K562 (cell line): ENCODE measurements at regions of chr11 and their contacts with region 1.

Region 1: DNA sequence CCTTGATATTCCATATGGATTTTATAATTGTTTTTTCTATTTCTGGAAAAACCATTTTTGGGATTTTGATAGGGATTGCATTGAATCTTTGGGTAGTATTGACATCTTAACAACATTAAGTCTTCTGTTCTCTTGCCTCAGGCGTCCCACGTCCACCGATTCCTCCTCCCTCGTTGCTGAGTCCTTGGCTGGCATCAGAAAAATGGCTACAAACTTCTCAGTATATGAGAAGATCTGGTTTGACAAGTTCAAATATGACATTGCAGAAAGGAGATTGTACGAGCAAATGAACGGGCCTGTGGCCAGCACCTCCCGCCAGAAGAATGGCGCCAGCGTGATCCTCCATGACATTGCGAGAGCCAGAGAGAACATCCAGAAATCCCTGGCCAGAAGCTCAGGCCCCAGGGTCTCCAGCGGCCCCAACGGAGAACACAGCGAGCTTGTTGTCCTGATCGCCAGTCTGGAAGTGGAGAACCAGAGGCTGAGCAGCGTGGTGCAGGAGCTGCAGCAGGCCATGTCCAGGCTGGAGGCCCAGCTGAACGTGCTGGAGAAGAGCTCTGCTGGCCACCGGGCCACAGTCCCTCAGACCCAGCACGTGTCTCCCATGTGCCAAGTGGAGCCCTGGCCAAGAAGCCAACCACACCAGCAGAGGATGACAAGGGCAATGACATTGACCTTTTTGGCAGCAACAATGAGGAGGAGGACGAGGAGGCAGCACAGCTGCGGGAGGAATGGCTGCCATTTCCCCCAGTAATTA is 20.7 kb upstream of the SCGB1D1 start:
- DNase-seq: no peak
- ATAC-seq: no peak
- H3K4me3 ChIP-seq: no peak overlapping the region
- H3K27ac ChIP-seq: no peak overlapping the region
- H3K4me1 ChIP-seq: peaks cover 0 to 6% of the 10 kb centered on the region in 2 experiments; a peak in 3 of 5 replicates
- H3K27me3 ChIP-seq: peaks cover 28 to 55% of the 10 kb centered on the region in 2 experiments
- CTCF ChIP-seq: no peak
- EP300 ChIP-seq: no peak
- POLR2A ChIP-seq: no peak
- RAD21 ChIP-seq: no peak

Region 2: DNA sequence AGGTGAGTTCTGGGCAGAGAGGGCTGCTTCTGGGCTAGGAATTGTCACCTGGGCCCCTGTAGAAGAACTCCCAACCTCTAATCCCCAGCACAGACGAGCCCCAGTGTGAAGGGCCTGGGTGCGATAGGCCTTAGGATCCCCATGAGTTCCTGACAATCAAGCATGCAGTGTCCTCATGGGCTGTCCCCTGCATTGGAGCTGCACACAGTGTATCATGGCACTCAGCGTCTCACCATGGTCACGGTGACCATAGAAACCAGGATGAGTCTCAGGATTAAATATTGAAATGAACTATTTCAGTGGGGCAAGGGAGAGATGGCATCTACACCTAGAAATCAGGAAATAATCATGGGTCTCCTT is 39.5 kb after region 1 on chr11:
- CTCF ChIA-PET with region 1: interaction called, 3 read pairs
- POLR2A ChIA-PET with region 1: no interaction called
- in situ Hi-C with region 1: no loop called
- intact Hi-C with region 1: loop called (anchors 2 kb)
- DNase-seq: no peak
- ATAC-seq: no peak
- H3K4me3 ChIP-seq: no peak overlapping the region
- H3K27ac ChIP-seq: no peak overlapping the region
- H3K4me1 ChIP-seq: no peaks in the 10 kb centered on the region
- H3K27me3 ChIP-seq: peaks cover 23 to 47% of the 10 kb centered on the region in 2 experiments
- CTCF ChIP-seq: no peak
- EP300 ChIP-seq: no peak
- POLR2A ChIP-seq: no peak
- RAD21 ChIP-seq: no peak

Region 3: DNA sequence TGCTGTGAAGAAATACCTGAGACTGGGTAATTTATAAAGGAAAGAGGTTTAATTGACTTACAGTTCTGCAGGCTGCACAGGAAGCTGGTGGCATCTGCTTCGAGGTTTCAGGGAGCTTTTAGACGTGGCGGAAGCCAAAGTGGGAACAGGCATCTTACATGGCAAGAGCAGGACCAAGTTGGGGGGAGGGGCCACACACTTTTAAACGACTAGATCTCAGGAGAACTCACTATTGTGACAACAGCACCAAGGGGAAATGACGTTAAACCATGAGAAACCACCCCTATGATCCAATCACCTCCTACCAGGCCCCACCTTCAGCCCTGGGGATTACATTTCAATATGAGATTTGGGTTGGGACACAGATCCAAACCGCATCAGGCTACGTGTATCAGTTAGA is 140.7 kb after region 1 on chr11:
- CTCF ChIA-PET with region 1: interaction called, 8 read pairs
- POLR2A ChIA-PET with region 1: no interaction called
- in situ Hi-C with region 1: no loop called
- intact Hi-C with region 1: loop called (anchors 2 kb)
- DNase-seq: no peak
- ATAC-seq: no peak
- H3K4me3 ChIP-seq: no peak overlapping the region
- H3K27ac ChIP-seq: no peak overlapping the region
- H3K4me1 ChIP-seq: peaks cover 0 to 4% of the 10 kb centered on the region in 2 experiments; a peak in 1 of 5 replicates
- H3K27me3 ChIP-seq: peaks cover 7 to 18% of the 10 kb centered on the region in 2 experiments; a peak in 3 of 5 replicates
- CTCF ChIP-seq: no peak
- EP300 ChIP-seq: no peak
- POLR2A ChIP-seq: no peak
- RAD21 ChIP-seq: no peak

Region 4: DNA sequence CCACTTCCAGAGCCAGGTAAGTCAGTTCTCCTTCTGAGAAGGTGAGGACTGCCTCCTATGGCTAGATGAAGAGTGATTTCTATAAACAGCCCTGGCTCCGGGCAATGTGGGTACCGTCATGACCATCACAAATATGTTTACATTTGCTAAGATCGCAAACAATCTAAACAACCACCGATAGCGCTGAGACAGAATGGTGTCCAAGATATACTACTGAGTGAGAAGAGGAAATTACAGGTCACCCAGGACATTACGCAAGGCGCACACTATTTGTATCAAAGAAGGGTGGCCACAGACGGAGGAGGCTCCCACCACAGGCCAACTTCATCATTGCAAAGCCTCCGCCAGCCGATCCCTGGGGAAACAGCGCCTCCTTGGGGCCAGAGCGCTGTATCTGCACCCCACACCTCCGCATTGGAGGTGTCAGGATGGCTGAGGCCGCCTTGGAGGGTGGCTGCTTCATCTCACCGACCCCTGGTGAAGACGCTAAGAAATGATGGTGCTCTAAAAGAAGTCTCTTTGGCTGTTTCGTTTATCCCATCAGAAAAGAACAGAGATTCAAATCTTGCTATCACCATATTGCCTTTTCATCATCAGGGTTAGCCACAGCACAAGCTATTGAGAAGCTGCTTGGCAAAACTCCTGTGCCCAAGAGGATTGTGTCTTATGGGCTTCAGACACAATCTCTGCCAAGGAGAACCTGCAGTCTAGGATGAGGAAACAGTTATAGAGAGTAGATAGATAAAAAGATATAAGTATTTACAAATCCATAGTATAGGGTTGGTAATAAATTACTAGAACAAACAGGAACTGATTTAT is 155.7 kb after region 1 on chr11:
- CTCF ChIA-PET with region 1: interaction called, 8 read pairs
- POLR2A ChIA-PET with region 1: no interaction called
- in situ Hi-C with region 1: no loop called
- intact Hi-C with region 1: loop called (anchors 1 kb)
- DNase-seq: peak; percentile 79 to 85 (median 80)
- ATAC-seq: peak; percentile 100
- H3K4me3 ChIP-seq: no peak overlapping the region
- H3K27ac ChIP-seq: no peak overlapping the region
- H3K4me1 ChIP-seq: no peaks in the 10 kb centered on the region; a peak in 1 of 5 replicates
- H3K27me3 ChIP-seq: peaks cover 12 to 18% of the 10 kb centered on the region in 2 experiments; a peak in 4 of 5 replicates
- CTCF ChIP-seq: peak; percentile 98 to 100 (median 99)
- EP300 ChIP-seq: no peak
- POLR2A ChIP-seq: no peak
- RAD21 ChIP-seq: peak; percentile 86 to 95